HCT116 (cell line): ENCODE measurements at regions of chr13 and their contacts with region 1.

Region 1: GRCh38 chr13:75372517-75372916 is 109.5 kb downstream of the TBC1D4 start:
- DNase-seq: no peak
- ATAC-seq: peak; percentile 81
- H3K4me3 ChIP-seq: no peak overlapping the region
- H3K27ac ChIP-seq: no peak overlapping the region
- H3K4me1 ChIP-seq: peaks cover 15 to 18% of the 10 kb centered on the region in 2 experiments; a peak in 3 of 4 replicates
- H3K27me3 ChIP-seq: no peaks in the 10 kb centered on the region
- CTCF ChIP-seq: peak; percentile 51 to 61 (median 59); a peak in 5 of 6 replicates
- POLR2A ChIP-seq: no peak
- RAD21 ChIP-seq: peak; percentile 55

Region 2: GRCh38 chr13:75055296-75055695 is 317.2 kb before region 1 on chr13:
- CTCF ChIA-PET with region 1: no interaction called
- POLR2A ChIA-PET with region 1: no interaction called
- RAD21 ChIA-PET with region 1: no interaction called
- intact Hi-C with region 1: no loop called
- DNase-seq: no peak
- ATAC-seq: no peak
- H3K4me3 ChIP-seq: no peak overlapping the region
- H3K27ac ChIP-seq: no peak overlapping the region
- H3K4me1 ChIP-seq: no peaks in the 10 kb centered on the region
- H3K27me3 ChIP-seq: no peaks in the 10 kb centered on the region
- CTCF ChIP-seq: no peak
- POLR2A ChIP-seq: no peak
- RAD21 ChIP-seq: no peak

Region 3: DNA sequence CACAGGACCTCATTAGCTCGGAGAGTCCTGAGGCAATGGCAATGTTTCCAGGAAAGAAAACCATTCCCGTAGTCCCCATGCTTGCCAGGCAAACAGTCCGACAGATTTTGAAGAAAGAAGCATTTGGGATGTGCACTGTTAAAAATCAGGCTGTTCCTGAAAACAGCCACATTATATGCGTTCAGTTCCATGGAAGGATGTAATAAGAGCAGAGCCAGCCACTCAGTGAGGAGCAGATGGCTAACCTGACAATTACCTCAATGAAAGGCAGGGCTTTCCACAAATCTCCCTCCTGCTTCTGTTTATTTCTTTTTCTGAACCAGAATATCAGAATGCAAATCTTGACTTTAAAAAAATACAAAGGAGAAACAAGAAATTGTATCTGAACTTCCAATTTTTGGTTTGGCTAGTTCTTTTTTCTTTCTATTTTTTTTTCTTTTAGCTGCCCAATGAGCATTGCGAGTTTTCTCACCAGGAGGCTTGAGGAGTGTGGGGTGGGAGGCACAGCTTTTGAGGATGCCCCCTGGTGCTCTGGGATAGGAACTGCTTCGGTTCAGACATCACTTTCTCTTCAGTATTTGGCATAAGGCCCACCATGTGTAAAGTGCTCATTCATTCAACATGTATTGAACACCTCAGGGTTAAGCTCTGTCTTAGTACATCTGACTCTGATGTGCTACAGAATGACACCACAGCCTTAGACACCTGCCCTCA is 14.8 kb before region 1 on chr13:
- CTCF ChIA-PET with region 1: interaction called, 18 read pairs
- POLR2A ChIA-PET with region 1: interaction called, 3 read pairs
- RAD21 ChIA-PET with region 1: no interaction called
- intact Hi-C with region 1: no loop called
- DNase-seq: peak; percentile 72
- ATAC-seq: peak; percentile 89
- H3K4me3 ChIP-seq: no peak overlapping the region
- H3K27ac ChIP-seq: no peak overlapping the region
- H3K4me1 ChIP-seq: peaks cover 19 to 28% of the 10 kb centered on the region in 2 experiments
- H3K27me3 ChIP-seq: no peaks in the 10 kb centered on the region
- CTCF ChIP-seq: peak; percentile 24 to 84 (median 73); a peak in 5 of 6 replicates
- POLR2A ChIP-seq: no peak
- RAD21 ChIP-seq: 0 out of 2 replicates have a peak, but pooled peaks have one; percentile 21

Region 4: DNA sequence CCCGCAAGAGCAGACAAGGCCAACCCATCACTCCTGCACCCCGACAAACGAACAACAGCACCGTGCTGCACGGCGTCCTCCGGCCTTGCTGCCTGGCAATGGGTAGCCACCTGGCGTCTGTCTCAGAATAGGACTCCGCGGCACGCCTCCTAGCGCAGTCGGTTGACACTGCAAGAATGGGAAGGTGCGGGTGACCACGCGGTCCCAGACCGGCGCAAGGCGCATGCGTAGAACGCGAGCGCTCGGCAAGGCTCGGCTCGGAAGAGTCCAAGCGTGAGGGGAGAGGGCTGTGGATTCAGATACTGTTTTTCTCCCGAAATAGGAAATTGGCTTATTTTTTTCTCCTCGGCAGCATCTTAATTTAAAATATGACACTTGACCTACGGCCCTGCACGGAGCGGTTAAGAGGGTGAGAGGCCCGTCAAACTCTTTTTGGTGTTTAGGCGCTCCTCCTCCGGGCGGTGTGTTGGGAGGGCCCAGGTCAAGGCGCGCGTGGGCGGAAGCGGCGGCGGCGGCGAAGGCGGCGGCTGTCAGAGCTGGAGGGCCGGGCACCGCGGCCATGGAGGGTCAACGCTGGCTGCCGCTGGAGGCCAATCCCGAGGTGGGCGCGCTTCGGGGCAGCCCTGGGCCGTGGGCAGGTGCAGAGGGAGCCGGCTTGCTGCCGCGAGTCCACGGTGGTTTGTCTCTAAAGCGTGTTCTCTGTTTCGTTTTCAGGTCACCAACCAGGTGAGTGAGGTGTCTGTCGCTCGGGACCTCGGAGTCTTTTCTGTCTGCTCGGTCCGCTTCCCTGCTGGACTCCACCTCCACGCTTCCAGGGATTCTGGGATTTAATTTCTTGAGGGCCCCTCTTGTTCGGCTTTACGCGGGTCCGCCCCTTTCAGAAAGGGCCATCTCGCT is 177.0 kb after region 1 on chr13 and contains the start of gene UCHL3:
- CTCF ChIA-PET with region 1: no interaction called
- POLR2A ChIA-PET with region 1: interaction called, 4 read pairs
- RAD21 ChIA-PET with region 1: no interaction called
- intact Hi-C with region 1: loop called (anchors 1 kb)
- DNase-seq: peak; percentile 94
- ATAC-seq: peak; percentile 90
- H3K4me3 ChIP-seq: peak within 1 kb of the TSS; percentile 74 to 81
- H3K27ac ChIP-seq: peak within 1 kb of the TSS; percentile 63
- H3K4me1 ChIP-seq: peaks cover 5 to 19% of the 10 kb centered on the region in 2 experiments; a peak in 3 of 4 replicates
- H3K27me3 ChIP-seq: no peaks in the 10 kb centered on the region
- CTCF ChIP-seq: peak; percentile 70 to 97 (median 82)
- POLR2A ChIP-seq: peak; percentile 58
- RAD21 ChIP-seq: peak; percentile 78
- total RNA-seq, gene UCHL3: 32.4 TPM

Region 5: DNA sequence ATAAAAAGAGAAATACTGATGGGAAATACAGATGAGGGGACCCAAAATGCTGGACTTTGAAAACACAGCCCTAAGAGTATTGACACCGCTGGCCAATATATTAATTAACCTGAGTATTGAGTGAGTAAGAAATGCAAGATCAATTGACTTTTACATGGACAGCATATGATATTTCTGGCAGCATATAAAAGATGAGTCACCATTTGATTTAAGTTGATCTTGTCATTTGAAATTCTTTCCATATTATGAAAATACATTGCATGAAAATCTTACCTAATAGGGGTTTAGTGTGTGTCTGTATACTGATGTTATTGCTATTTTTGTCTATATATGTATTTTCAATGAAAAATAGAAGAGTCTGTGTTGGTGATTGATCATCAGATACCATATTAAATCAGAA is 894.0 kb after region 1 on chr13:
- CTCF ChIA-PET with region 1: no interaction called
- POLR2A ChIA-PET with region 1: no interaction called
- RAD21 ChIA-PET with region 1: no interaction called
- intact Hi-C with region 1: no loop called
- DNase-seq: no peak
- ATAC-seq: no peak
- H3K4me3 ChIP-seq: no peak overlapping the region
- H3K27ac ChIP-seq: no peak overlapping the region
- H3K4me1 ChIP-seq: no peaks in the 10 kb centered on the region
- H3K27me3 ChIP-seq: no peaks in the 10 kb centered on the region
- CTCF ChIP-seq: no peak
- POLR2A ChIP-seq: no peak
- RAD21 ChIP-seq: no peak

Region 6: DNA sequence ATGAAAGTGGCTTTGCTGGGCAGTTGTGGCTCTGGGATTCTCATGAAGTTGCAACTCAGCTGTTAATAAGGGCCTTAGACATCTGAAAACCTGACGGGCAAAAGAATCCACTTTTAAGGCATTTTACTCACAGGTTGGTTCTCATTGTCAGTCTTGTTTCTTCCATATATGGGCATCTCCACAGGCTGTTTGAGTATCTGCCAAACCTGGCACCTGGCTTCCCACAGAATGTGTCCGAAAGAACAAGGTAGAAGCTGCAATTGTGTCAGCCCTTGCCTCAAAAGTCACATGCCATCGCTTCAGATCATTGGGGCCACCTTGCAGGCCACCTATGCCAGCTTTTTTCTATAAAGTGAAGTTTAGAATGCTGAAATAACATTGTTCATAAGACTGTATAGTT is 1411.3 kb after region 1 on chr13:
- CTCF ChIA-PET with region 1: no interaction called
- POLR2A ChIA-PET with region 1: no interaction called
- RAD21 ChIA-PET with region 1: no interaction called
- intact Hi-C with region 1: no loop called
- DNase-seq: no peak
- ATAC-seq: no peak
- H3K4me3 ChIP-seq: no peak overlapping the region
- H3K27ac ChIP-seq: no peak overlapping the region
- H3K4me1 ChIP-seq: no peaks in the 10 kb centered on the region
- H3K27me3 ChIP-seq: no peaks in the 10 kb centered on the region
- CTCF ChIP-seq: no peak
- POLR2A ChIP-seq: no peak
- RAD21 ChIP-seq: no peak

Region 7: DNA sequence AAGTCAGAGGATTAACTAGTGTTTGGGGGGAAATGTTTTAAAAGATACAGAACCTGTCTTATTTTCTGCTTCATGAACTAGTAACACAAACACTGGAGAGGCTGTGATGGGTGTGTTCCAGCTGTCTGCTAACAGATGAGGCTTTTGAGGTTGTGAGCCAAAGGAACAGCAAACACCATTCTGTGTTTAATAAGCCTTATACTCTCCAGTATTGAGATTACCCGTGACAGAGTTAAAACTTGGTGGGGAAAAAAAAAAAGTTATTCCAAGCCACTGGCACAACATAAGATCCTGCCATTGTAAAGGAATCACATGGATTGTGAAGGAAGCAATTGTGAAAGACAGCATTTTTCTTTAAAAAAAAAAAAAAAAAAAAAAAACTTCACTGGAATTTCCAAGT is 1465.3 kb after region 1 on chr13:
- CTCF ChIA-PET with region 1: no interaction called
- POLR2A ChIA-PET with region 1: no interaction called
- RAD21 ChIA-PET with region 1: no interaction called
- intact Hi-C with region 1: no loop called
- DNase-seq: no peak
- ATAC-seq: no peak
- H3K4me3 ChIP-seq: no peak overlapping the region
- H3K27ac ChIP-seq: no peak overlapping the region
- H3K4me1 ChIP-seq: no peaks in the 10 kb centered on the region
- H3K27me3 ChIP-seq: no peaks in the 10 kb centered on the region
- CTCF ChIP-seq: no peak
- POLR2A ChIP-seq: no peak
- RAD21 ChIP-seq: no peak